ENCODE measurements at regions of chr12 and their contacts with region 1.

Region 1: GRCh38 chr12:44804068-44804467 is 72.0 kb downstream of the NELL2 start:
- DNase-seq: no peak
- H3K4me3 ChIP-seq: no peak overlapping the region
- H3K27ac ChIP-seq: no peak overlapping the region
- H3K4me1 ChIP-seq: no peaks in the 10 kb centered on the region
- H3K27me3 ChIP-seq: no peaks in the 10 kb centered on the region
- CTCF ChIP-seq: no peak
- EP300 ChIP-seq: no peak
- POLR2A ChIP-seq: no peak

Region 2: DNA sequence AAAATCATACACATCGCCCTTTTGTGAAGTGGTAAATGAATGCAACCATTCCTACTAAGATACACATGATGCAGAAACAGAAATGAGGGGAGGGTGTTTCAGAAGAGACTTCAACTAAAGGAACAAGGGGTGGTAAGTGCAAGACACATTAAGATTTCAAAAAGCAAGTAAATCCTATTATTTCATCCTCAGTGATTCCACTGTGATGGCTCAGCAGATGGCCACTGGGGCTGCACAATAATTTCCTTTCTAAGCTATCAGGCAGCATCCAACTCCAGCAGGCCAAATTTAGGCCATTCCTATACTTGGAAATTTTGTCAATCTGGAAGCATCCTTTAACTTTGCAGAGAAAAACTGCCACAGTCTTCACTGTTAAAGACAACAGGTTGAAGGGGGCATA is 200.4 kb before region 1 on chr12:
- intact Hi-C with region 1: loop called (anchors 5 kb)
- DNase-seq: no peak
- H3K4me3 ChIP-seq: no peak overlapping the region
- H3K27ac ChIP-seq: no peak overlapping the region
- H3K4me1 ChIP-seq: no peaks in the 10 kb centered on the region
- H3K27me3 ChIP-seq: no peaks in the 10 kb centered on the region
- CTCF ChIP-seq: no peak
- EP300 ChIP-seq: no peak
- POLR2A ChIP-seq: no peak

Region 3: GRCh38 chr12:44677724-44678123 is 126.3 kb before region 1 on chr12:
- intact Hi-C with region 1: no loop called
- DNase-seq: no peak
- H3K4me3 ChIP-seq: no peak overlapping the region
- H3K27ac ChIP-seq: no peak overlapping the region
- H3K4me1 ChIP-seq: no peaks in the 10 kb centered on the region
- H3K27me3 ChIP-seq: no peaks in the 10 kb centered on the region
- CTCF ChIP-seq: no peak
- EP300 ChIP-seq: no peak
- POLR2A ChIP-seq: no peak

Region 4: GRCh38 chr12:44889162-44889561 is 85.1 kb after region 1 on chr12:
- intact Hi-C with region 1: no loop called
- DNase-seq: no peak
- H3K4me3 ChIP-seq: no peak overlapping the region
- H3K27ac ChIP-seq: no peak overlapping the region
- H3K4me1 ChIP-seq: no peaks in the 10 kb centered on the region
- H3K27me3 ChIP-seq: no peaks in the 10 kb centered on the region
- CTCF ChIP-seq: no peak
- EP300 ChIP-seq: no peak
- POLR2A ChIP-seq: no peak